Astrocyte of the cerebellum (primary cell): ENCODE measurements at regions of chr1 and their contacts with region 1.

Region 1: GRCh38 chr1:18661404-18662284 is 31.0 kb downstream of the PAX7 start:
- DNase-seq: no peak
- H3K4me3 ChIP-seq: no peak overlapping the region
- CTCF ChIP-seq: no peak

Region 2: DNA sequence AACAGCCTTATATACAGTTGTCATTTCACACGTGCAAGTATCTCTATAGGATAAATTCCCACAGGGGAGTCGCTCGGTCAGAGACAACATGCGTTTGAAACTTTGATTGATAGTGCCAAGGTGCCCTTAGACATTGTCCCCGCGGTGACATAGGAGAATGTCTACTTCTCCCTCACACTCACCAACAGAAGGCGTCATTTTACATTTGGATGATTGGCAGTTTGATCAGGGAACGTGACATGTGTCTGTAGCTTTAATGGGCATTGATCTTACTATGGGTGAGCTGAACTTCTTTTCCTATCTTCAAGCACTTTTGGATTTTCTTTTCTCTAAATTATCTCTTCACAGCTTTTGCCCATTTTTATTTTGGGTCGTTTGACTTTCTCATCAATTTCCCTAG is 73.6 kb before region 1 on chr1:
- in situ Hi-C with region 1: loop called (anchors 5 kb)
- DNase-seq: no peak
- H3K4me3 ChIP-seq: no peak overlapping the region
- CTCF ChIP-seq: no peak

Region 3: GRCh38 chr1:18608534-18608933 is 53.1 kb before region 1 on chr1:
- in situ Hi-C with region 1: no loop called
- DNase-seq: no peak
- H3K4me3 ChIP-seq: no peak overlapping the region
- CTCF ChIP-seq: no peak